ENCODE measurements at regions of chr1 and their contacts with region 1.

Region 1: GRCh38 chr1:32933742-32934322 is 30.8 kb downstream of the RNF19B start:
- DNase-seq: no peak
- ATAC-seq: peak; percentile 11
- H3K4me3 ChIP-seq: no peak overlapping the region
- H3K4me3 Mint-ChIP-seq: no peak overlapping the region
- H3K27ac ChIP-seq: no peak overlapping the region
- H3K27ac Mint-ChIP-seq: no peak overlapping the region
- H3K4me1 ChIP-seq: no peaks in the 10 kb centered on the region
- H3K4me1 Mint-ChIP-seq: no peaks in the 10 kb centered on the region
- H3K27me3 ChIP-seq: no peaks in the 10 kb centered on the region
- H3K27me3 Mint-ChIP-seq: no peaks in the 10 kb centered on the region
- CTCF ChIP-seq: peak; percentile 3

Region 2: GRCh38 chr1:32886004-32886827 is 47.6 kb before region 1 on chr1 and contains the start of gene HPCA:
- CTCF ChIA-PET with region 1: no interaction called
- POLR2A ChIA-PET with region 1: no interaction called
- intact Hi-C with region 1: no loop called
- DNase-seq: peak in 5 of 14 experiments; percentile 9 to 58 (median 20)
- ATAC-seq: peak; percentile 80
- H3K4me3 ChIP-seq: no peak within 1 kb of the TSS
- H3K4me3 Mint-ChIP-seq: no peak within 1 kb of the TSS
- H3K27ac ChIP-seq: no peak within 1 kb of the TSS
- H3K27ac Mint-ChIP-seq: no peak within 1 kb of the TSS
- H3K4me1 ChIP-seq: peaks cover 13% of the 10 kb centered on the region
- H3K4me1 Mint-ChIP-seq: no peaks in the 10 kb centered on the region
- H3K27me3 ChIP-seq: peaks cover 52 to 86% of the 10 kb centered on the region in 2 experiments
- H3K27me3 Mint-ChIP-seq: peaks cover 76% of the 10 kb centered on the region
- CTCF ChIP-seq: no peak
- total RNA-seq, gene HPCA: not detected

Region 3: DNA sequence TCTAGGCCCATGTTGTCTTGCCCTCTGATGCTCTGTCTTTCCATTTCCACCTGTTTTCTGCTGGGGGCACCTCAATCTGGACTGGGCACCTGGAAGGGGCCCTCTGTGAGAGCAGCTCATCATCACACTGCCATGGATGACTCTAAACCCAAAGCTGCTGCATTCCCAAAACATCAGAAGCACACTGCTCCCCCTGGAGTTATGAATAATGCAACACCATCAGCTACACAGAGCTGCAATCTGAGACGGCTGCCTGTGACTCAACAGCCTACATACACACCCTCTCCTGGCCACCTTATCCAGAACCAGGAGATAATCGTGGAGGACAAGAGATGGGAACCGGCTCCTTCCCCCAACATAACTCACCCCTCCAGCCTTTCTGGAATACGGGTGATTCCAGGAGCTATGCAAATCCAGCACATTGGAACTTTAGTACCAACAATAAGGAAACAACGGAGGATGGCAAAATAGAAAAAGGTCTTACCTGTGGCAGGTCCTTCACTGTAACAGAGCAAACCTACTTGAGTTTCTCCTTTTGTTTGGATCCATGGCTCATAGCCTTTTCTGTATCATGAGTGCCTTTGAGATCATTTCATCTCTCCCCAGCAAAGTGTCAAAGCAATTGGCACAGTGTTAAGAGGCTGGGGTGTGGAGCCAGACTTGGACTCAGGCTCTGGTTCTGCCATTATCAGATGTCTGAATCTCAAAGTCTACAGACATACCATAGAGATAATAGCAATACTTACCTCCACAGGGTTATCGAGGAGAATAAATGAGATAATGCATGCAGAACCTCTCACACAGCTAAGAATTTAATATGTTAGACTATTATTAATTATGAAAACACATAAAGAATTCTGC is 73.6 kb after region 1 on chr1:
- CTCF ChIA-PET with region 1: interaction called, 9 read pairs
- POLR2A ChIA-PET with region 1: no interaction called
- intact Hi-C with region 1: loop called (anchors 1 kb)
- DNase-seq: peak in 8 of 14 experiments; percentile 4 to 69 (median 24)
- ATAC-seq: peak; percentile 41
- H3K4me3 ChIP-seq: no peak overlapping the region
- H3K4me3 Mint-ChIP-seq: no peak overlapping the region
- H3K27ac ChIP-seq: no peak overlapping the region
- H3K27ac Mint-ChIP-seq: no peak overlapping the region
- H3K4me1 ChIP-seq: no peaks in the 10 kb centered on the region
- H3K4me1 Mint-ChIP-seq: no peaks in the 10 kb centered on the region
- H3K27me3 ChIP-seq: no peaks in the 10 kb centered on the region
- H3K27me3 Mint-ChIP-seq: no peaks in the 10 kb centered on the region
- CTCF ChIP-seq: no peak

Region 4: GRCh38 chr1:33055210-33056008 is 121.6 kb after region 1 on chr1:
- CTCF ChIA-PET with region 1: interaction called, 17 read pairs
- POLR2A ChIA-PET with region 1: interaction called, 7 read pairs
- intact Hi-C with region 1: loop called (anchors 1 kb)
- DNase-seq: peak in 5 of 14 experiments; percentile 7 to 74 (median 50)
- ATAC-seq: peak; percentile 49
- H3K4me3 ChIP-seq: no peak overlapping the region
- H3K4me3 Mint-ChIP-seq: no peak overlapping the region
- H3K27ac ChIP-seq: no peak overlapping the region
- H3K27ac Mint-ChIP-seq: no peak overlapping the region
- H3K4me1 ChIP-seq: peaks cover 5% of the 10 kb centered on the region
- H3K4me1 Mint-ChIP-seq: no peaks in the 10 kb centered on the region
- H3K27me3 ChIP-seq: no peaks in the 10 kb centered on the region
- H3K27me3 Mint-ChIP-seq: peaks cover 4% of the 10 kb centered on the region
- CTCF ChIP-seq: peak; percentile 49

Region 5: DNA sequence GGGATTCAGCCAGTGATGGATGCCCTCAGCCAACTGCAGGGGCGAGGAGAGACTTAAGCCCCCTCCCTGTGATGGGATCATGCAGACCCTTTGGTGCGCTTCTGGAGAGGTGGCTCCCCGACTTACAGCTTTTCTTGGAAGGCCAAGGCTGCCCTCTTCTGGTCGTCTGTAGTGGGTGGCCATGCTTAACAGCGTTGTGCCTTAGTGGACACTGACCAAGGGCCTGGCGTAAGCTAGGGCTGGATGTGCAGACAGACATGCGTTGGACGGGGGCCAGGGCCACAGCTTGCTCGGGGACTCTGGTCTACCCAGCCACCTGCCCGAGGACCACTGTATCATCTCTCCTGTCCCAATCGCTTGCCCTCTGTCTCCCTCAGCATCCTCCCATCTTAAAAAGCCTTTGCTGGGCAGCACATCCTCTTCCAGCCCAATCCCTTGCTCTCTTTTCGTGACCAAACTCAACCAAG is 152.6 kb after region 1 on chr1:
- CTCF ChIA-PET with region 1: interaction called, 4 read pairs
- POLR2A ChIA-PET with region 1: interaction called, 3 read pairs
- intact Hi-C with region 1: loop called in 1 of 2 experiments (anchors 1 kb)
- DNase-seq: peak in 11 of 14 experiments; percentile 22 to 68 (median 30)
- ATAC-seq: no peak
- H3K4me3 ChIP-seq: no peak overlapping the region
- H3K4me3 Mint-ChIP-seq: no peak overlapping the region
- H3K27ac ChIP-seq: no peak overlapping the region
- H3K27ac Mint-ChIP-seq: no peak overlapping the region
- H3K4me1 ChIP-seq: peaks cover 31% of the 10 kb centered on the region
- H3K4me1 Mint-ChIP-seq: peaks cover 43% of the 10 kb centered on the region
- H3K27me3 ChIP-seq: no peaks in the 10 kb centered on the region
- H3K27me3 Mint-ChIP-seq: no peaks in the 10 kb centered on the region
- CTCF ChIP-seq: no peak

Region 6: GRCh38 chr1:33094971-33095604 is 161.3 kb after region 1 on chr1:
- CTCF ChIA-PET with region 1: no interaction called
- POLR2A ChIA-PET with region 1: no interaction called
- intact Hi-C with region 1: loop called in 1 of 2 experiments (anchors 1 kb)
- DNase-seq: peak in 4 of 14 experiments; percentile 11 to 54 (median 52)
- ATAC-seq: no peak
- H3K4me3 ChIP-seq: no peak overlapping the region
- H3K4me3 Mint-ChIP-seq: no peak overlapping the region
- H3K27ac ChIP-seq: no peak overlapping the region
- H3K27ac Mint-ChIP-seq: no peak overlapping the region
- H3K4me1 ChIP-seq: peaks cover 34% of the 10 kb centered on the region
- H3K4me1 Mint-ChIP-seq: peaks cover 36% of the 10 kb centered on the region
- H3K27me3 ChIP-seq: no peaks in the 10 kb centered on the region
- H3K27me3 Mint-ChIP-seq: no peaks in the 10 kb centered on the region
- CTCF ChIP-seq: peak; percentile 99

Region 7: GRCh38 chr1:33367485-33368405 is 433.9 kb after region 1 on chr1:
- CTCF ChIA-PET with region 1: no interaction called
- POLR2A ChIA-PET with region 1: no interaction called
- intact Hi-C with region 1: loop called (anchors 2 to 5 kb)
- DNase-seq: peak; percentile 77 to 93 (median 86)
- ATAC-seq: peak; percentile 99
- H3K4me3 ChIP-seq: no peak overlapping the region
- H3K4me3 Mint-ChIP-seq: no peak overlapping the region
- H3K27ac ChIP-seq: no peak overlapping the region
- H3K27ac Mint-ChIP-seq: no peak overlapping the region
- H3K4me1 ChIP-seq: peaks cover 9% of the 10 kb centered on the region
- H3K4me1 Mint-ChIP-seq: no peaks in the 10 kb centered on the region
- H3K27me3 ChIP-seq: peaks cover 0 to 4% of the 10 kb centered on the region in 2 experiments
- H3K27me3 Mint-ChIP-seq: no peaks in the 10 kb centered on the region
- CTCF ChIP-seq: peak; percentile 97

Measured in CD4-positive, alpha-beta T cell (primary cell).